ENCODE measurements at regions of chr6 and their contacts with region 1.

Region 1: DNA sequence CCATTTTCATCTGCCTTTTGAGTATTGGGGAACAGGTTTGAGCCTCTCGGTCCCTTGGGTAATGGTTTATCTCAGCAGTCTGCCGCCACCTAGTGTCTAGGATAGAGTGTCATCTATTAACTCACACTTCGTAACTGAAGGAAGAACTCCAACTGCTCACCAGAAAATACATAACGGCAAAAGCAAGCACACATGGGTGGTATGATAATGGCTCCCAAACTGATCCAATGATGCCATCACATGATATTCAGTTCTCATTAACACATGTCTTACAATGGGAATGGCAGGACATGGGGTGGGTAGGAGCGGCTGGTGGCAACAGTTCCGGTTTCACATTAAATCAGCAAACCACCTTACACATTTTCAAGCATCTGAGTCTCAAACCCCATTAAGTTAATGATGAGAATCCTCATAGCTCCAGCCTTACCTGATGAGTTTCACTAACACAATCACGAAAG is 110.7 kb upstream of the PHACTR1 start:
- DNase-seq: peak; percentile 62
- ATAC-seq: peak; percentile 75
- H3K4me3 Mint-ChIP-seq: no peak overlapping the region
- H3K27ac Mint-ChIP-seq: no peak overlapping the region
- H3K4me1 Mint-ChIP-seq: no peaks in the 10 kb centered on the region
- H3K27me3 Mint-ChIP-seq: peaks cover 14% of the 10 kb centered on the region
- CTCF ChIP-seq: peak; percentile 65

Region 2: GRCh38 chr6:11585426-11586016 is 1020.4 kb before region 1 on chr6:
- CTCF ChIA-PET with region 1: interaction called, 10 read pairs
- POLR2A ChIA-PET with region 1: no interaction called
- intact Hi-C with region 1: loop called (anchors 5 kb)
- DNase-seq: no peak
- ATAC-seq: no peak
- H3K4me3 Mint-ChIP-seq: no peak overlapping the region
- H3K27ac Mint-ChIP-seq: no peak overlapping the region
- H3K4me1 Mint-ChIP-seq: no peaks in the 10 kb centered on the region
- H3K27me3 Mint-ChIP-seq: peaks cover 4% of the 10 kb centered on the region
- CTCF ChIP-seq: peak; percentile 61

Region 3: GRCh38 chr6:12648171-12648570 is 42.3 kb after region 1 on chr6:
- CTCF ChIA-PET with region 1: no interaction called
- POLR2A ChIA-PET with region 1: no interaction called
- intact Hi-C with region 1: no loop called
- DNase-seq: no peak
- ATAC-seq: no peak
- H3K4me3 Mint-ChIP-seq: no peak overlapping the region
- H3K27ac Mint-ChIP-seq: no peak overlapping the region
- H3K4me1 Mint-ChIP-seq: no peaks in the 10 kb centered on the region
- H3K27me3 Mint-ChIP-seq: no peaks in the 10 kb centered on the region
- CTCF ChIP-seq: no peak

Measured in activated CD8-positive, alpha-beta T cell treated with anti-CD3 and anti-CD28 coated beads for 36 hours (primary cell).